Panc1 (cell line): ENCODE measurements at regions of chr1 and their contacts with region 1.

Region 1: GRCh38 chr1:33158366-33158765 is 23.5 kb downstream of the TRIM62 start:
- DNase-seq: no peak
- ATAC-seq: no peak
- H3K4me3 ChIP-seq: no peak overlapping the region
- H3K27ac ChIP-seq: no peak overlapping the region
- H3K4me1 ChIP-seq: no peaks in the 10 kb centered on the region
- H3K27me3 ChIP-seq: no peaks in the 10 kb centered on the region
- CTCF ChIP-seq: no peak

Region 2: DNA sequence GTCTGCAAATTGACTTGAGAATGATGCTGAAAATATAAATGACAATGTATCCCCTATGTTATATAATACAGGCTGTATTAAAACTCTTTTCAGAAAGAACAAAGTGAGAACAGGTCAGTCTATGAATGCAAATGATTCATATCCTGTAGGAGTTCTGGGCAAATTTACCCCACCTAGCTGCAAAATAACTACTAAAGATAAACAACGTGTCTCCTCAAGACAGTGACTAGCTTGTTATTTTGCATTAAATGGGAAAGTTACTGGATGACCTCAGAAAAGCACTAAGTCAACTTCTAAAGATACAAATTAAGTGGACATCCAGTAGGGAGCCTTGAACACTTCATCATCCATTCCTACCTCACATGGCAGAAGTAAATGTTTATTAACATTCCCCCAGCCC is 204.9 kb before region 1 on chr1:
- CTCF ChIA-PET with region 1: no interaction called
- POLR2A ChIA-PET with region 1: no interaction called
- in situ Hi-C with region 1: no loop called
- intact Hi-C with region 1: no loop called
- DNase-seq: peak; percentile 82
- ATAC-seq: peak; percentile 66; the same call in 1 of the 2 replicates
- H3K4me3 ChIP-seq: no peak overlapping the region
- H3K27ac ChIP-seq: no peak overlapping the region
- H3K4me1 ChIP-seq: peaks cover 9% of the 10 kb centered on the region
- H3K27me3 ChIP-seq: no peaks in the 10 kb centered on the region
- CTCF ChIP-seq: no peak

Region 3: DNA sequence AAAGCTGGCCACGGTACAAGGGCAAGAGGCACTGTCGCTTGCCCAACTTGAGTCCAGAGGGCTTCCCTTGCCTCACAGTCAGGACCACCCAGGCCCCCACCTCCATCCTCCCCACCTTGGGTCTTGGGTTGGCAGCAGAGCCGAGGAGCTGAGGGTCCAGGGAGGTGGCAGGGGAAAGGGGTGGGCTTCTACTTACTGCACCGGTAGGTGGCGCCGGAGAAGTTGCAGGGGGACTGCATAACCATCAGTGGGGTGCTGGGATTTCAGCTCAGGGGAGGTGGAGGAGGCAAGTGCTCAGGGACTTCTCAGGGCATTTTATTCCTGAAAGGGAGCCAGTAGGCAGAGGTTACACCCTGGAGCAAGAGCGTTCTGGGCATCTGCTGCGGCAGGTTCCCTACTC is 20.6 kb before region 1 on chr1:
- CTCF ChIA-PET with region 1: interaction called, 14 read pairs
- POLR2A ChIA-PET with region 1: no interaction called
- in situ Hi-C with region 1: no loop called
- intact Hi-C with region 1: no loop called
- DNase-seq: no peak
- ATAC-seq: peak; percentile 46; the same call in 1 of the 2 replicates
- H3K4me3 ChIP-seq: no peak overlapping the region
- H3K27ac ChIP-seq: no peak overlapping the region
- H3K4me1 ChIP-seq: no peaks in the 10 kb centered on the region
- H3K27me3 ChIP-seq: no peaks in the 10 kb centered on the region
- CTCF ChIP-seq: peak; percentile 78